Heart right ventricle (tissue), 16 donors: ENCODE measurements at regions of chr13 and their contacts with region 1.

Region 1: GRCh38 chr13:26186118-26186870 is 35.8 kb downstream of the RNF6 start:
- DNase-seq: peak; percentile 84 to 87
- ATAC-seq: peak; percentile 96 to 98 (median 96)
- H3K4me3 ChIP-seq: peak overlapping the region; percentile 33 to 88 (median 66)
- H3K27ac ChIP-seq: peak overlapping the region; percentile 11 to 91 (median 81)
- H3K4me1 ChIP-seq: peaks cover 0 to 24% (median 11%) of the 10 kb centered on the region in 9 donors
- H3K27me3 ChIP-seq: no peaks in the 10 kb centered on the region
- CTCF ChIP-seq: peak in 8 of 9 donors; percentile 13 to 52 (median 32)

Region 2: GRCh38 chr13:26253787-26254582 is 67.7 kb after region 1 on chr13 and contains the start of gene CDK8:
- intact Hi-C with region 1: loop called in 1 of 10 experiments (anchors 10 kb)
- DNase-seq: peak; percentile 92 to 94
- ATAC-seq: peak; percentile 94 to 98 (median 97)
- H3K4me3 ChIP-seq: peak within 1 kb of the TSS; percentile 74 to 98 (median 88)
- H3K27ac ChIP-seq: peak within 1 kb of the TSS; percentile 70 to 98 (median 94)
- H3K4me1 ChIP-seq: peaks cover 0 to 35% (median 25%) of the 10 kb centered on the region in 9 donors
- H3K27me3 ChIP-seq: no peaks in the 10 kb centered on the region
- CTCF ChIP-seq: peak in 1 of 9 donors; percentile 18
- total RNA-seq, gene CDK8: 6.4 to 11.0 (median 9.2) TPM

Region 3: DNA sequence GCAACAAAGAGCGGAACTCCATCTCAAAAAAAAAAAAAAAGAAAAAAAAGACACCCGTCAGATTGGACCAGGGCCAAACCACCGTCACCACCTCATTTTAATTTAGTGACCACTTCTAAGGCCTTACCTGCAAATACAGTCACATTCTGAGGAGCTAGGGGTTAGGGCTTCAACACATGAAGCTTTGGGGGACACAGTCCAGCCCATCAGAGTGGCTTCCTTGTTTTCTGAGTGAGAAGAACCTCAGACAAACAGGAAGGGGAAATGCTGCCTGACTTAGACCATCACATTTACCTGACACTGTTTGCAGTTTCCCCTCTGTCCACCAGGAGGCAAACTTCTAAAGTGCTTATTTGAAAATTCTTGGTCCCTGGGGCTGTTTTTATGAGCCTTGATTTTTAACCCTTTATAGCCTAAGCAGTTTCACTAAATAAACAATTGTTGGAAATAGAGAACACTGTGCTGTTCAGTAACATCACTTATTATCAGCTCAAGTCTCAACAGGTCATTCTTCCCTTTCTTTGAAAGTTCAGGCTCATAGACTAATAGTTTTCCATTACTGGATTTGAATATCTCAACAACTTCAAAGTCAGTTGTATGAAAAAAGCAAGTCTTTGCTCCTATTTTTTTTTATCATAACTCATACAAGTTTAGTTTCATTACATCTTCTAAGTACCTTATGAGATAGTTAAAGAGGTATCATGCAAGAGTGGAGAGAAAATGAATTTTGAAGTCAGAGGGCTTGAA is 296.3 kb after region 1 on chr13:
- intact Hi-C with region 1: loop called in 3 of 10 experiments (anchors 5 kb)
- DNase-seq: peak in 1 of 2 donors; percentile 62
- ATAC-seq: peak in 3 of 8 donors; percentile 39 to 50 (median 46)
- H3K4me3 ChIP-seq: no peak overlapping the region
- H3K27ac ChIP-seq: peak overlapping the region in 1 of 10 donors; percentile 27
- H3K4me1 ChIP-seq: peaks cover 0 to 14% (median 3%) of the 10 kb centered on the region in 9 donors
- H3K27me3 ChIP-seq: no peaks in the 10 kb centered on the region
- CTCF ChIP-seq: peak; percentile 75 to 92 (median 87)

Region 4: GRCh38 chr13:26502826-26503225 is 316.5 kb after region 1 on chr13:
- intact Hi-C with region 1: loop called in 4 of 10 experiments (anchors 1 to 5 kb)
- DNase-seq: no peak
- ATAC-seq: peak; percentile 16 to 80 (median 45)
- H3K4me3 ChIP-seq: no peak overlapping the region
- H3K27ac ChIP-seq: no peak overlapping the region
- H3K4me1 ChIP-seq: peaks cover 0 to 7% (median 0%) of the 10 kb centered on the region in 9 donors
- H3K27me3 ChIP-seq: peaks cover 0 to 8% (median 3%) of the 10 kb centered on the region in 7 donors
- CTCF ChIP-seq: peak in 1 of 9 donors; percentile 20